ENCODE measurements at regions of chr15 and their contacts with region 1.

Region 1: GRCh38 chr15:44728576-44729407 is 7.5 kb upstream of the TRIM69 start:
- DNase-seq: peak; percentile 96
- ATAC-seq: peak; percentile 95
- H3K4me3 ChIP-seq: peak overlapping the region; percentile 68 to 98 (median 85)
- H3K27ac ChIP-seq: peak overlapping the region; percentile 82
- H3K4me1 ChIP-seq: peaks cover 48% of the 10 kb centered on the region
- H3K27me3 ChIP-seq: no peaks in the 10 kb centered on the region
- CTCF ChIP-seq: 0 out of 2 replicates have a peak, but pooled peaks have one; percentile 8
- EP300 ChIP-seq: no peak; a peak in 1 of 4 replicates
- POLR2A ChIP-seq: peak; percentile 60 to 73
- RAD21 ChIP-seq: 0 out of 2 replicates have a peak, but pooled peaks have one; percentile 12

Region 2: DNA sequence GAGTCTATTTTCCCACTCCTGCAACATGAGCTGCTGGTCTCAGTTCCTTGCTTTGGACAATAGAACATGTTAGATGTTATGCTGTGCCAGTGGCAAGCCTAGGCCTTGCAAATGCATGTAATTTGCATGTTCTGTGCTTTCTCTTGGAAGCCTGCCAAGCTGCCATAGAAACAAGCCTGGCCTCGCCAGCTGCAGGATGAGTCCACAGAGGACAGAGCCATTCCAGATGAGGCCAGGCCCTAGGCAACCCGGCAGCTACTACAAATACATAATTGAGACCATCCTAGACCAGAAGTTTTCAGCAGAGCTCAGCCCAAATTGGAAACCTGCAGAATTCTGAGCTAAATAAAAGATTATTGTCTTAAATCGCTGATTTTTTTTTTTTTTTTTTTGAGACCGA is 47.2 kb after region 1 on chr15:
- CTCF ChIA-PET with region 1: no interaction called
- POLR2A ChIA-PET with region 1: no interaction called
- in situ Hi-C with region 1: no loop called
- intact Hi-C with region 1: no loop called
- DNase-seq: no peak
- ATAC-seq: no peak
- H3K4me3 ChIP-seq: no peak overlapping the region
- H3K27ac ChIP-seq: no peak overlapping the region
- H3K4me1 ChIP-seq: no peaks in the 10 kb centered on the region
- H3K27me3 ChIP-seq: no peaks in the 10 kb centered on the region
- CTCF ChIP-seq: no peak
- EP300 ChIP-seq: no peak
- POLR2A ChIP-seq: no peak
- RAD21 ChIP-seq: no peak

Region 3: DNA sequence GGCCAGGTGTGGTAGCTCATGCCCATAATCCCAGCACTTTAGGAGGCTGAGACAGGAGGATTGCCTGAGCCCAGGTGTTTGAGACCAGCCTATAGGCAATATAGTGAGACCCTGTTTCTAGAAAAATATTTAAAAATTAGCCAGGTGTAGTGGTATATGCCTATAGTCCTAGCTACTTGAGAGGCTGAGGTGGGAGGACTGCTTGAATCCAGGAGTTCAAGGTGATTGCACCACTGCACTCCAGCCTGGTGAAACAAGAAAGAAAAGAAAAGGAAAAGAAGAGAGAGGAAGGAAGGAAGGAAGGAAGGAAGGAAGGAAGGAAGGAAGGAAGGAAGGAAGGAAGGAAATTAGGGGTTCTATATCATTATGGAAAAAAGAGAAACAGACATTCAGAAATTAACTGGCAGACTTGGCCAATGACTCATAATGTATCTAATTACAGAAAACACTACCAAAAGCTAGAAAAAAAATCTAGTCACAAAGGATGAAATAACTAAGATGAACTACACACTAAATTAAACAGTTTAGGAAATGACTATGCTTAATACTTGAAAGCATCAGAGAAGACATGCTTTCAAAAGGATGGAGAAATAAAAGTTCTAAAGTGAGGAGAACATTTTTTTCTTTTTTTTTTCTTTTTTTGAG is 182.3 kb after region 1 on chr15:
- CTCF ChIA-PET with region 1: no interaction called
- POLR2A ChIA-PET with region 1: interaction called, 8 read pairs
- in situ Hi-C with region 1: no loop called
- intact Hi-C with region 1: loop called (anchors 5 kb)
- DNase-seq: no peak
- ATAC-seq: no peak
- H3K4me3 ChIP-seq: no peak overlapping the region
- H3K27ac ChIP-seq: no peak overlapping the region
- H3K4me1 ChIP-seq: peaks cover 35% of the 10 kb centered on the region
- H3K27me3 ChIP-seq: peaks cover 0 to 5% of the 10 kb centered on the region in 2 experiments; a peak in 1 of 5 replicates
- CTCF ChIP-seq: no peak
- EP300 ChIP-seq: no peak
- POLR2A ChIP-seq: no peak
- RAD21 ChIP-seq: no peak

Region 4: DNA sequence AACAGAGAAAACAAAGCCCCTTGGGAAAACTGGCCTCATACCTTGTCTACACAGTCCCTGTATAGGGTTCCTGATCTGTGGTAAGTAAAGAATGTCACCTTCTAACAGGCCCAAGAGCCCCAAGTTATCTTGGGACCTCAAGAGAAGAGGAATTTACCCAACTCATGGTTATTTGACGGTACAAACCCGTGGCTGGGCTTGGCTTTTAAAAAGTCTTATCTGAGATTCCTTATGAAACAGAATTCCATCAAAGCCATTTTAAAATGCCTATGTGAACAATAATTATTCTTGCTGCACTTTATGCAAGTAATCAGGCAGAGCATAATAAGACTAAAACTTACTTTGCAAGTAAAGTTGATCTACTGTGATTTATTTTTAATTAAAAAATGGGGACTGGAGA is 280.3 kb after region 1 on chr15:
- CTCF ChIA-PET with region 1: no interaction called
- POLR2A ChIA-PET with region 1: no interaction called
- in situ Hi-C with region 1: no loop called
- intact Hi-C with region 1: no loop called
- DNase-seq: no peak
- ATAC-seq: no peak
- H3K4me3 ChIP-seq: no peak overlapping the region
- H3K27ac ChIP-seq: no peak overlapping the region
- H3K4me1 ChIP-seq: peaks cover 11% of the 10 kb centered on the region
- H3K27me3 ChIP-seq: peaks cover 0 to 4% of the 10 kb centered on the region in 2 experiments; a peak in 2 of 5 replicates
- CTCF ChIP-seq: no peak
- EP300 ChIP-seq: no peak
- POLR2A ChIP-seq: no peak
- RAD21 ChIP-seq: no peak